ENCODE measurements at regions of chr22 and their contacts with region 1.

Region 1: DNA sequence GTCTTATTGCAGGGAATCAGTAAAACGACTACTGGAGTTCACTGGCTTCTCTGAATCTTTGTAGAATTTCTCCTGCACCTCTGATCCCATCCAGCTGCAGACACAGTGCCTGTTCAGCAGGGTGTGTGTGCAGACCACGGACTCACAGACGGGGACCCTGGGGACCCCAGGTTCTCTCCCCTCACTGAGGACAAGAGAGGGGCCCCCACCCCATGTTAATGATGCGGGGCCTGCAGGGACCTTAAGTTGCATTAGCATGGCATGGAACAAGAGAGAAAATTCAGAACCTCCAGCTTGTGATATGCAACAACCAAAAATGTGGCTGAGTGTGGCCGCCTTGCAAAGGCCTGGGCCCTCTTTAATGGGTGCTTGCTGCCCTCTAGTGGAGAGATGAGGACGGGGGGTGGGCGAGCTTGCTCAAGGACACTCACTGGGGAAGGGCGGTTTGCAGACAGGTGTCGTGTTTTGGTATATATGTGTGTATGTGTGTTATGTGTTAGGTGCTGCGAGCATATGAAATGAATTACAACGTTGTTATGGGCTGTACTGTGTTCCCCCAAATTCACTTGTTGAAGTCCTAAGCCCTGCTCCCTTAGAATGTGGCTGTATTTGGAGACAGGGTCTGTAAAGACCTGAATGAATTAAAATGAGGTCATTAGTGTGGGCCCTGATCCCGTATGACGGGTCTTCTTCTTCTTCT is 84.4 kb upstream of the SEPTIN5 start:
- DNase-seq: peak; percentile 92
- ATAC-seq: peak; percentile 79
- H3K4me3 Mint-ChIP-seq: no peak overlapping the region
- H3K27ac Mint-ChIP-seq: no peak overlapping the region; the same call in 1 of the 2 replicates
- H3K4me1 Mint-ChIP-seq: peaks cover 24% of the 10 kb centered on the region
- H3K27me3 Mint-ChIP-seq: no peaks in the 10 kb centered on the region
- CTCF ChIP-seq: peak; percentile 79

Region 2: DNA sequence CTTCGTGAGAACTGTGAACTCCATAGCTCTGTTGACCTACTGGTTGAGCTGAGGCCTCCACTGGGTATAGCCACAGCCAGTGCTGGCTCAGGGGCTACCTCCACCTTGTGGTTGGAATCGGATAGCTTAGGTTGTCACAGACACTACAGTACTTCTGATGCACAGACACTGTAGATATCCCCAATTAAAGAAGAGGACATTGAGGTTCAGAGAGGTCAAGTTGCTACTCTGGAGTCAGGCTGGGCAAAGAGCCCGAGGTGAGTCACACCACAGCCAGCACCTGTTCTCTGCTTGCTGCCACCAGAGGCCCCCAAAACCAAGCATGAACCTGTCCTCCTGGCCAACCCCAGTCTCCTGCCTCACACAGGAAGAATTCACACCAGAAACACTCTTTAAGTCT is 156.3 kb before region 1 on chr22:
- CTCF ChIA-PET with region 1: interaction called, 20 read pairs
- POLR2A ChIA-PET with region 1: no interaction called
- DNase-seq: no peak
- ATAC-seq: no peak; the same call in 1 of the 2 replicates
- H3K4me3 Mint-ChIP-seq: no peak overlapping the region
- H3K27ac Mint-ChIP-seq: no peak overlapping the region
- H3K4me1 Mint-ChIP-seq: peaks cover 12% of the 10 kb centered on the region
- H3K27me3 Mint-ChIP-seq: no peaks in the 10 kb centered on the region
- CTCF ChIP-seq: no peak

Region 3: DNA sequence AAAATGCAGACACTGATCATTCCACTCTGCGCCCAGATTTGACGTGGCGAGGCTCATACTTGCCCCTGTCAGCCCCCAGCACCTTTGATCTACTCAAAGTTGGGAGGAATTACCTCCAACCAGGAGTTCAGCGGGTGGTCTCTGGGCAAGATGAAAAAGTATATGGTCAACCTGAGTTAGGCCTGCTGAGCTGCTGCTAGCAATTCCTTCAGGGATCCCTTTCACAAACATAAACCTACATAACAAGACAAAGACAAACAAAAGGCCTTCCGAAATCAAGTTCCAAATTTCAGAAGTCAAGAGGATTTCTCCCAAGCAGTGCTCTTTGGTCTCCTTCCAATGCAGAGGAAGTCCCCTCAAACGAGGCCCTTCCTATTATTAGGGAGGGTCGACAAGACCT is 126.5 kb before region 1 on chr22:
- CTCF ChIA-PET with region 1: interaction called, 10 read pairs
- POLR2A ChIA-PET with region 1: no interaction called
- DNase-seq: no peak
- ATAC-seq: no peak
- H3K4me3 Mint-ChIP-seq: no peak overlapping the region
- H3K27ac Mint-ChIP-seq: no peak overlapping the region
- H3K4me1 Mint-ChIP-seq: peaks cover 5% of the 10 kb centered on the region; the same call in 1 of the 2 replicates
- H3K27me3 Mint-ChIP-seq: no peaks in the 10 kb centered on the region
- CTCF ChIP-seq: no peak

Region 4: DNA sequence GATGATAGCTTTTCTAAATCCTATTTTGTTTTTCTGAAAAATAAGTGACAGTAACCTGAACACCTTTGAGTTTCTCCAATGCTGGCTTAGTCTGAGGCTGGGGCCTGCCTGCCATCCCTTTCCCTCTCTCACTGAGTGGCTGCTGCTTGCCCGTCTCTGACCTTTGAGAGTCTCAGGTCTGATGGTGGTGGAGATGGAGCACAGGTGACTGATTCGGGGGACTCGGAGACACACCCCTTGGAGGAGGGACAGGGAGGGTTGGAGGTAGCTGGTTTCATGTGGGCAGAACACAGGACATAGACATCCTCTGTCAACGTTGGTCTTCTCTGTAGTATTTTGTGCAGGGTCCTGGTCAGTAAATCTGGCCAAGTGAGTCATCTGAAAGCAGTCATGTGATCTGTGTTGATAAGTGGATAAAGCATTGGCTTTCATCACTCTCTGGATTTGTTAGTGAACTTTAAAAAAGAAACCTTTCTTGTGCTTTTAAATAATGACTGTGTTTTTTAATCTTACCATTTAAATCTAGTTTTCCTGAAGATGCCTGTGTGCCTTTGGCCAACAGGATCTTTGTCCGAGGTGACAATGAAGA is 58.6 kb before region 1 on chr22:
- CTCF ChIA-PET with region 1: interaction called, 40 read pairs
- POLR2A ChIA-PET with region 1: no interaction called
- DNase-seq: no peak
- ATAC-seq: no peak
- H3K4me3 Mint-ChIP-seq: no peak overlapping the region
- H3K27ac Mint-ChIP-seq: no peak overlapping the region
- H3K4me1 Mint-ChIP-seq: peaks cover 7% of the 10 kb centered on the region
- H3K27me3 Mint-ChIP-seq: no peaks in the 10 kb centered on the region
- CTCF ChIP-seq: no peak

Region 5: DNA sequence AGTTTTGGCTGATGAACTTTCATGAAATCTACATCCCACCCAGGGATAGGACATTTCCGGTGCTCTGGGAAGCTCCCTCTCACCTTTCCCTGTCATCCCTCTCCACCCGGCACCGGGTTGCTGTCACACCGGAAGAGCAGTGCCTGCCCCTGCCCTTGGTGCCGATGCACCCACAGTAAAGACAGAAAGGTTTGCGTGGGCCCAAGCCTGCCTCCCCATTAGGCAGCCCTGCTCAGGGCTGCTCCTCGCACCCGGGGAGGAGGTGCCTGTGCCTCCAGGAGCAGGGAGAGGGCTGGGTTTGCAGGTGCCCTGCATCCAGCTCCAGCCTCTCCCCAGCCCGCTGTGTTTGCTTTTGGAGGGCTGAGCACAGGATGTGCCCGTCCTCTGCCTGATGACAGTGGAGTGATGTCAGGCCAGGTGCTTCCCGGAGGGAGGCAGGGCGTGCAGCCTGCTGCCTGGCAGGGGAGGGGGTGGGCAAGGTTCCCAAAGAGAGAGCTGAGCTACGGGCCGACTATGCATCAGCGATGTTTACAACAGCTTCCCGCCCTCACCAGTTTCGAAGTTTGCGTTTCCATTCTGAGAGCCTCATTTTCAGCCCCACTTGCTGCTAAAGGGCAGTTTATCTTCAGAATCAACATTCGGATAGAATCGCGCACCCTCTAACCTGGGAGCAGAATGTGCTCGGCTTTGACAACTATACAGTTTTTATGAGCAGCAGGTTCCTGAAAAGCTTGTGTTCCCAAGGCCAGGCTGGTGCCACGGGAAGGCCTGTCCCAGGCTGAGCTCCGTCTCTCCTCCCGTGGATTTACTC is 22.5 kb before region 1 on chr22:
- CTCF ChIA-PET with region 1: interaction called, 23 read pairs
- POLR2A ChIA-PET with region 1: no interaction called
- DNase-seq: peak; percentile 37
- ATAC-seq: peak; percentile 51
- H3K4me3 Mint-ChIP-seq: no peak overlapping the region
- H3K27ac Mint-ChIP-seq: no peak overlapping the region
- H3K4me1 Mint-ChIP-seq: peaks cover 28% of the 10 kb centered on the region
- H3K27me3 Mint-ChIP-seq: no peaks in the 10 kb centered on the region
- CTCF ChIP-seq: no peak

Region 6: GRCh38 chr22:19679522-19680101 is 49.7 kb after region 1 on chr22:
- CTCF ChIA-PET with region 1: interaction called, 17 read pairs
- POLR2A ChIA-PET with region 1: no interaction called
- DNase-seq: peak; percentile 91
- ATAC-seq: peak; percentile 95
- H3K4me3 Mint-ChIP-seq: no peak overlapping the region
- H3K27ac Mint-ChIP-seq: no peak overlapping the region
- H3K4me1 Mint-ChIP-seq: peaks cover 11% of the 10 kb centered on the region
- H3K27me3 Mint-ChIP-seq: peaks cover 4% of the 10 kb centered on the region
- CTCF ChIP-seq: peak; percentile 95

Region 7: GRCh38 chr22:19717691-19718455 is 88.0 kb after region 1 on chr22:
- CTCF ChIA-PET with region 1: interaction called, 21 read pairs
- POLR2A ChIA-PET with region 1: no interaction called
- DNase-seq: peak; percentile 70
- ATAC-seq: peak; percentile 29
- H3K4me3 Mint-ChIP-seq: peak overlapping the region; percentile 62
- H3K27ac Mint-ChIP-seq: no peak overlapping the region
- H3K4me1 Mint-ChIP-seq: peaks cover 21% of the 10 kb centered on the region
- H3K27me3 Mint-ChIP-seq: peaks cover 80% of the 10 kb centered on the region
- CTCF ChIP-seq: peak; percentile 95

Region 8: GRCh38 chr22:19783631-19784383 is 153.9 kb after region 1 on chr22:
- CTCF ChIA-PET with region 1: no interaction called
- POLR2A ChIA-PET with region 1: no interaction called
- DNase-seq: peak; percentile 6
- ATAC-seq: no peak
- H3K4me3 Mint-ChIP-seq: no peak overlapping the region
- H3K27ac Mint-ChIP-seq: no peak overlapping the region
- H3K4me1 Mint-ChIP-seq: no peaks in the 10 kb centered on the region
- H3K27me3 Mint-ChIP-seq: peaks cover 2% of the 10 kb centered on the region; the same call in 1 of the 2 replicates
- CTCF ChIP-seq: no peak

Measured in WTC11 (cell line).